Activated naive CD4-positive, alpha-beta T cell treated with anti-CD3 and anti-CD28 coated beads for 36 hours (primary cell): ENCODE measurements at regions of chr7 and their contacts with region 1.

Region 1: DNA sequence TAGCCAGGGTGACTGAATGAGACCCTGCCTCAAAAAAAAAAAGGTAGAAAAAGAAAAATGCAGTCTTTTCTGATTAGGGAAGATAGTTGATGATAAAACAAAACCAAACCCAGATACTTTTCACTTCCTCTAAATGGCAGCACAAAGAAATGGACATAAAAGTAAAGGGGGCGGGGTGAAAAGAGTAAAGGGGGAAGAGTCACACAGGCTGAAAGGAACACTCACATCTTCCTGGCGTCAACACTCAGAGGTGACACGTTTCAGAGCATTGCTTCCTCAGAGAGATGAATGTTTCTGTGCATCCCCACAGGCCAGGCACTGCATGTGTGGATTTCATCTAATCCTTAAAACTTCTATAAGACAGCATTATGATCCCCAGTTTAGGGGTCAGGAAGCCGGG is 81.2 kb downstream of the HIPK2 start:
- DNase-seq: peak; percentile 78
- H3K4me3 Mint-ChIP-seq: no peak overlapping the region
- H3K27ac Mint-ChIP-seq: peak overlapping the region; percentile 81
- H3K4me1 Mint-ChIP-seq: peaks cover 30% of the 10 kb centered on the region
- H3K27me3 Mint-ChIP-seq: no peaks in the 10 kb centered on the region

Region 2: DNA sequence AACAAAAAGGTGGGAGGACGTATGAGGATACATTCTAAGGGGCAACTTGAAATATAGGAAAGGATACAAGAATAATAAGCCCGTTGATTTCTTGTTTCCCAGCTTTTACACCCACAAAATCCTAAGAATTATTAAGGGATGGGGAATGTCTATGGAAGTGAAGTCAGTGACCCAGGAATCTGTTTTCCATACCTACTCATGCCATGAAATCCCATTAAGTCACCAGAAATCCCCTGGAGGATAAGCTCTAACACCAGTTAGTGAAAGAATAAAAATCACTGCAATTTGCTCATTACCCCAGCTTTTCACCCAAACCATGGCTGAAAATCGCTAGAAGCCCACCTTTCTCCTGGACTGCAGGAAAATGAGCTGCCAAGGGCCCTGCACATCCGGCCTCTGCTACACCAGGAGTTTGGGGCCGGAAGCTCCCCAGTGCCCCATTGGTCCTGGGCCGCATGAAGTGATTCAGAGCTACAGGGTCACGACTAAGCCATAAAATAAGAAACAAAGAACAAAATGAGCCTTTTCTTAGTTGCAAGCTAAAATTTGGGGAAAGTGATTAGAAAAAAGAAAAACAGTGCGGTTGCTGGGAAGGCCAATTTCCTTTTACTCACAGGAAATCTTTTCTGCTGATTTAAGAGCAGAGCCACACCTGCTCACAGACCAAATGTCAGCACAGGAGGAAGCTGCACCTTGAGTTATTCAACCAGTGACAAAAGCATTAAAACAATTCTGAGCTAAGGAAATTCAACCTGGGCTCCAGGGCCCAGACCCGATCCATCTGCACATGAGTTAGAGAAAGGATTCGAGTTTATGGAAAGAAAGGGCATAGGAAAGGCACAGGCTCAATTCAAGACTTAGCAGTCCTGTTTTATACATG is 40.9 kb after region 1 on chr7:
- CTCF ChIA-PET with region 1: no interaction called
- intact Hi-C with region 1: loop called (anchors 1 kb)
- DNase-seq: peak; percentile 74
- H3K4me3 Mint-ChIP-seq: peak overlapping the region; percentile 38
- H3K27ac Mint-ChIP-seq: peak overlapping the region; percentile 84
- H3K4me1 Mint-ChIP-seq: peaks cover 55% of the 10 kb centered on the region
- H3K27me3 Mint-ChIP-seq: no peaks in the 10 kb centered on the region

Region 3: GRCh38 chr7:139798221-139798620 is 101.7 kb after region 1 on chr7:
- CTCF ChIA-PET with region 1: no interaction called
- intact Hi-C with region 1: no loop called
- DNase-seq: peak; percentile 69
- H3K4me3 Mint-ChIP-seq: peak overlapping the region; percentile 22
- H3K27ac Mint-ChIP-seq: no peak overlapping the region
- H3K4me1 Mint-ChIP-seq: peaks cover 14% of the 10 kb centered on the region
- H3K27me3 Mint-ChIP-seq: no peaks in the 10 kb centered on the region